SK-N-SH (cell line): ENCODE measurements at regions of chr1 and their contacts with region 1.

Region 1: GRCh38 chr1:88877382-88877825 is 14.0 kb downstream of the GTF2B start:
- DNase-seq: peak; percentile 23
- H3K4me3 ChIP-seq: no peak overlapping the region
- H3K27ac ChIP-seq: no peak overlapping the region
- H3K4me1 ChIP-seq: no peaks in the 10 kb centered on the region
- H3K27me3 ChIP-seq: no peaks in the 10 kb centered on the region
- CTCF ChIP-seq: peak; percentile 71
- EP300 ChIP-seq: no peak
- RAD21 ChIP-seq: peak; percentile 58

Region 2: GRCh38 chr1:88655685-88656299 is 221.6 kb before region 1 on chr1:
- CTCF ChIA-PET with region 1: interaction called, 102 read pairs
- POLR2A ChIA-PET with region 1: no interaction called
- DNase-seq: peak; percentile 30
- H3K4me3 ChIP-seq: no peak overlapping the region
- H3K27ac ChIP-seq: no peak overlapping the region
- H3K4me1 ChIP-seq: no peaks in the 10 kb centered on the region; a peak in 1 of 4 replicates
- H3K27me3 ChIP-seq: no peaks in the 10 kb centered on the region
- CTCF ChIP-seq: peak; percentile 80
- EP300 ChIP-seq: no peak
- RAD21 ChIP-seq: peak; percentile 58; the same call in 1 of the 2 replicates

Region 3: GRCh38 chr1:88683541-88684481 is 193.6 kb before region 1 on chr1 and contains the start of gene PKN2:
- CTCF ChIA-PET with region 1: interaction called, 12 read pairs
- POLR2A ChIA-PET with region 1: no interaction called
- DNase-seq: peak; percentile 97
- H3K4me3 ChIP-seq: peak within 1 kb of the TSS; percentile 95 to 98
- H3K27ac ChIP-seq: peak within 1 kb of the TSS; percentile 90 to 92
- H3K4me1 ChIP-seq: peaks cover 5 to 11% of the 10 kb centered on the region in 2 experiments; a peak in 2 of 4 replicates
- H3K27me3 ChIP-seq: no peaks in the 10 kb centered on the region
- CTCF ChIP-seq: no peak; the same call in 1 of the 2 replicates
- EP300 ChIP-seq: no peak; a peak in 1 of 4 replicates
- RAD21 ChIP-seq: peak; percentile 30; the same call in 1 of the 2 replicates
- polyA plus RNA-seq, gene PKN2: 6.8 and 11.2 TPM in 2 replicates

Region 4: GRCh38 chr1:88744142-88744541 is 133.3 kb before region 1 on chr1:
- CTCF ChIA-PET with region 1: no interaction called
- POLR2A ChIA-PET with region 1: no interaction called
- DNase-seq: no peak
- H3K4me3 ChIP-seq: no peak overlapping the region
- H3K27ac ChIP-seq: no peak overlapping the region
- H3K4me1 ChIP-seq: peaks cover 0 to 7% of the 10 kb centered on the region in 2 experiments; a peak in 2 of 4 replicates
- H3K27me3 ChIP-seq: no peaks in the 10 kb centered on the region
- CTCF ChIP-seq: no peak
- EP300 ChIP-seq: no peak
- RAD21 ChIP-seq: no peak

Region 5: DNA sequence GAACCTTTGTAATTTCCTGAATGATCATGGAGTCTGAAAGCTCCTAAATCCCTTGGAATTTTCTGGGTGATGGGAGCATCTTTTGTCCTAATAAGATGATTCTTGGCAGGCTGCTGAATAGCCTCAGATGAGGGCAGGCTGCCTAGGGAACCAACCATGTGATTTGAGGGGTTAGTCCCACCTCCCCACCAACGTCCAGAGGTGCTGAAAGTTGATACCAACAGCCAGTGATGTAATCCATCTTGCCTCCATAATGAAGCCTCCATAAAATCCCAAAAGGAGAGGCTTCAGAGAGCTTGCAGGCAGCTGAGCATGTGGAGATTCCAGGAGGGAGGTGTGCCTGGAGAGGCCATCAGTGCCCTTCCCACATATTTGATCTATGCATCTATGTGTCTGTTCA is 29.8 kb before region 1 on chr1:
- CTCF ChIA-PET with region 1: interaction called, 13 read pairs
- POLR2A ChIA-PET with region 1: no interaction called
- DNase-seq: no peak
- H3K4me3 ChIP-seq: no peak overlapping the region
- H3K27ac ChIP-seq: no peak overlapping the region
- H3K4me1 ChIP-seq: no peaks in the 10 kb centered on the region
- H3K27me3 ChIP-seq: no peaks in the 10 kb centered on the region
- CTCF ChIP-seq: no peak
- EP300 ChIP-seq: no peak
- RAD21 ChIP-seq: no peak

Region 6: GRCh38 chr1:88888750-88889149 is 11.3 kb after region 1 on chr1:
- CTCF ChIA-PET with region 1: interaction called, 30 read pairs
- POLR2A ChIA-PET with region 1: no interaction called
- DNase-seq: no peak
- H3K4me3 ChIP-seq: 0 out of 4 replicates have a peak overlapping the region, but pooled peaks of 1 of the 2 experiments have one; percentile 4
- H3K27ac ChIP-seq: no peak overlapping the region
- H3K4me1 ChIP-seq: peaks cover 9 to 14% of the 10 kb centered on the region in 2 experiments; a peak in 3 of 4 replicates
- H3K27me3 ChIP-seq: no peaks in the 10 kb centered on the region
- CTCF ChIP-seq: no peak
- EP300 ChIP-seq: no peak
- RAD21 ChIP-seq: no peak